Esophagus squamous epithelium (tissue), 5 donors: ENCODE measurements at regions of chr7 and their contacts with region 1.

Region 1: GRCh38 chr7:140316165-140316661 is 82.1 kb downstream of the SLC37A3 start:
- DNase-seq: no peak
- H3K4me3 ChIP-seq: peak overlapping the region; percentile 0 to 54 (median 31)
- H3K27ac ChIP-seq: peak overlapping the region; percentile 78 to 94 (median 90)
- H3K4me1 ChIP-seq: peaks cover 18 to 39% (median 22%) of the 10 kb centered on the region in 3 donors
- H3K27me3 ChIP-seq: no peaks in the 10 kb centered on the region
- CTCF ChIP-seq: no peak
- POLR2A ChIP-seq: peak in 1 of 4 donors; percentile 18

Region 2: DNA sequence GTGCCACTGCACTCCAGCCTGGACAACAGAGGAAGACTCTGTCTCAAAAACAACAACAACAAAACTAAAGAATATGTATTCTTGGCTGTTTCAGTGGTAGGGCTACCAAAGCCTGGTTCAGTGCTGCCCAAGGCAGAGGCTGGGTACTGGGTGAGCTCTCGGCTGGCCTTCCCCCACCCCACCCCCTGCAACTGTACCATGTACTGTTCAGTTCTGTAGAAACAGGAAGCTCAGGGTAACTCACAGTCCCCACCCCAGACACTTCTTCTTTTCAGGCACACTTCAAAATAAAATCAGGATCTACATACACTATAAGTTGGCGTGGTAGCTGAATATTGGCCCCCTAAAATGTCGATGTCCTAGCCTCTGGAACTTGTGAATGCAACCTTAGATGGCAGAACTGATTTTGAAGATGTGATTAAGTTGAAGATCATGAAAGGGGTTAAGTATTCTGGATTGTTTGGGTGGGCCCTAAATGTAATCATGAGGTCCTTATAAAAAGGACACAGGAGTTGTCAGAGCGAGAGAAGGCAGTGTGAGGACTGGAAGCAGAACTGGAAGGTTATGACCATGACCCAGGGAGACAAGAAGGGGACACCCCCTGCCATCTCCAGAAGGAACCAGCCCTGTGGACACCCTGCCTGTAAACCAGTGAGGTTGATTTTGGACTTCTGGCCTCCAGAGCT is 456.0 kb before region 1 on chr7:
- intact Hi-C with region 1: no loop called
- DNase-seq: no peak
- H3K4me3 ChIP-seq: no peak overlapping the region
- H3K27ac ChIP-seq: peak overlapping the region in 2 of 4 donors; percentile 46 to 61
- H3K4me1 ChIP-seq: peaks cover 0 to 19% (median 0%) of the 10 kb centered on the region in 3 donors
- H3K27me3 ChIP-seq: no peaks in the 10 kb centered on the region
- CTCF ChIP-seq: no peak
- POLR2A ChIP-seq: no peak

Region 3: GRCh38 chr7:140175221-140176121 is 140.7 kb before region 1 on chr7:
- intact Hi-C with region 1: loop called (anchors 10 kb)
- DNase-seq: peak; percentile 85
- H3K4me3 ChIP-seq: peak overlapping the region; percentile 82 to 96 (median 88)
- H3K27ac ChIP-seq: peak overlapping the region; percentile 99 to 100 (median 100)
- H3K4me1 ChIP-seq: peaks cover 0 to 44% (median 16%) of the 10 kb centered on the region in 3 donors
- H3K27me3 ChIP-seq: peaks cover 0 to 1% (median 0%) of the 10 kb centered on the region in 4 donors
- CTCF ChIP-seq: peak; percentile 37 to 84 (median 79)
- POLR2A ChIP-seq: peak in 3 of 4 donors; percentile 26 to 99 (median 98)